T-cell (primary cell): ENCODE measurements at regions of chr9 and their contacts with region 1.

Region 1: GRCh38 chr9:93123561-93124283 is 10.3 kb downstream of the NINJ1 start:
- DNase-seq: no peak
- ATAC-seq: no peak
- H3K4me3 ChIP-seq: no peak overlapping the region
- H3K4me3 Mint-ChIP-seq: peak overlapping the region in 1 of 3 donors; percentile 40
- H3K27ac ChIP-seq: peak overlapping the region; percentile 9
- H3K27ac Mint-ChIP-seq: peak overlapping the region; percentile 46 to 77
- H3K4me1 ChIP-seq: peaks cover 10 to 69% of the 10 kb centered on the region in 2 experiments
- H3K4me1 Mint-ChIP-seq: peaks cover 58 to 70% (median 63%) of the 10 kb centered on the region in 3 donors
- H3K27me3 ChIP-seq: no peaks in the 10 kb centered on the region
- H3K27me3 Mint-ChIP-seq: no peaks in the 10 kb centered on the region

Region 2: DNA sequence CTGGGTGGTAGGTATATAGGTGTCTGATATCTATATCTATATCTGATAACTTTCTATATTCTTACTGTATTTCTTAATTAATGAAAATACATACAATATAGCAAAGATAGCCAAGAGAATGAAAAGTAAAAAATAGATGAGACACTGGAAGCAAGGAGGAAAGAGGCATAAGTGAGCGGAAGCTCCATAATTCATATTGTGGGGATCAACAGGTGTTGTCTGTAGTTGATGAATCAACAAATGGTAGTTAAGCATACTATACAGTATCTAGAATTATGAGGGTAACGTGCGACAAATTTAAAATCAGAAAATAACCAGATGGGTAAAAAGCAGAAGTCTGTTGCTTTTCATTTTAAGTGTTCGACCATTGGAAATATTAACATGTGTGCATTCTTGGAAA is 1015.6 kb before region 1 on chr9:
- CTCF ChIA-PET with region 1: no interaction called
- POLR2A ChIA-PET with region 1: no interaction called
- DNase-seq: no peak
- ATAC-seq: no peak
- H3K4me3 ChIP-seq: no peak overlapping the region
- H3K4me3 Mint-ChIP-seq: no peak overlapping the region
- H3K27ac ChIP-seq: no peak overlapping the region
- H3K27ac Mint-ChIP-seq: no peak overlapping the region
- H3K4me1 ChIP-seq: no peaks in the 10 kb centered on the region
- H3K4me1 Mint-ChIP-seq: peaks cover 28 to 34% (median 34%) of the 10 kb centered on the region in 3 donors
- H3K27me3 ChIP-seq: no peaks in the 10 kb centered on the region
- H3K27me3 Mint-ChIP-seq: no peaks in the 10 kb centered on the region

Region 3: GRCh38 chr9:92180669-92181181 is 943.0 kb before region 1 on chr9:
- CTCF ChIA-PET with region 1: no interaction called
- POLR2A ChIA-PET with region 1: no interaction called
- DNase-seq: no peak
- ATAC-seq: no peak
- H3K4me3 ChIP-seq: no peak overlapping the region
- H3K4me3 Mint-ChIP-seq: no peak overlapping the region
- H3K27ac ChIP-seq: no peak overlapping the region
- H3K27ac Mint-ChIP-seq: no peak overlapping the region
- H3K4me1 ChIP-seq: no peaks in the 10 kb centered on the region
- H3K4me1 Mint-ChIP-seq: no peaks in the 10 kb centered on the region
- H3K27me3 ChIP-seq: peaks cover 0 to 10% of the 10 kb centered on the region in 2 experiments
- H3K27me3 Mint-ChIP-seq: peaks cover 8 to 10% of the 10 kb centered on the region in 2 donors

Region 4: GRCh38 chr9:92820964-92821363 is 302.8 kb before region 1 on chr9:
- CTCF ChIA-PET with region 1: no interaction called
- POLR2A ChIA-PET with region 1: no interaction called
- DNase-seq: no peak
- ATAC-seq: no peak
- H3K4me3 ChIP-seq: no peak overlapping the region
- H3K4me3 Mint-ChIP-seq: no peak overlapping the region
- H3K27ac ChIP-seq: no peak overlapping the region
- H3K27ac Mint-ChIP-seq: no peak overlapping the region
- H3K4me1 ChIP-seq: no peaks in the 10 kb centered on the region
- H3K4me1 Mint-ChIP-seq: no peaks in the 10 kb centered on the region
- H3K27me3 ChIP-seq: peaks cover 0 to 9% of the 10 kb centered on the region in 2 experiments
- H3K27me3 Mint-ChIP-seq: peaks cover 17 to 29% of the 10 kb centered on the region in 2 donors

Region 5: DNA sequence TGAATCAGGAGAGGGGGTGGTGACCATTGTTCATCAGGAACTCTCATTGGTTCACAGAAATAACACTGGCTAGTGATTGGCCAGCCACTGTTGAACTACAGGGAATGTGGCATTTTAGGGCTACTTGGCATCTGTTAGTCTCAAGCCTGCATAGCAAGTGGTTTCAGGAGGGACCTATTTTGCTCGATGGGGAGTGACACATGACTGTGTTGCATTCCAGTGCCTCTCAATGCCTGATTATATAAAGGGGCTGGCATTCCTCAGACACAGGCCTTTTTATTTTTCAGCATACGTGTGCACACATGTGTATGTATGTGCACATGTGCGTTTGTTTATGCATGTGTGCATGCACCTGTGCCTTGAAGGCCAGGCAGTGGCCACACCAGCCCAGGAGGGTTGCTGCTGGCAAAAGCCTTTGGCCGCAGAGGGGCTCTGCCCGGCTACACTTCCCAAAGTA is 153.2 kb before region 1 on chr9:
- CTCF ChIA-PET with region 1: no interaction called
- POLR2A ChIA-PET with region 1: interaction called in 1 of 2 experiments, 12 read pairs
- DNase-seq: peak in 2 of 35 experiments; percentile 7 to 10
- ATAC-seq: no peak
- H3K4me3 ChIP-seq: peak overlapping the region; percentile 13 to 25
- H3K4me3 Mint-ChIP-seq: peak overlapping the region; percentile 84 to 94 (median 91)
- H3K27ac ChIP-seq: peak overlapping the region; percentile 73
- H3K27ac Mint-ChIP-seq: peak overlapping the region; percentile 99 to 100
- H3K4me1 ChIP-seq: peaks cover 46 to 89% of the 10 kb centered on the region in 2 experiments
- H3K4me1 Mint-ChIP-seq: peaks cover 81 to 91% (median 90%) of the 10 kb centered on the region in 3 donors
- H3K27me3 ChIP-seq: no peaks in the 10 kb centered on the region
- H3K27me3 Mint-ChIP-seq: no peaks in the 10 kb centered on the region

Region 6: DNA sequence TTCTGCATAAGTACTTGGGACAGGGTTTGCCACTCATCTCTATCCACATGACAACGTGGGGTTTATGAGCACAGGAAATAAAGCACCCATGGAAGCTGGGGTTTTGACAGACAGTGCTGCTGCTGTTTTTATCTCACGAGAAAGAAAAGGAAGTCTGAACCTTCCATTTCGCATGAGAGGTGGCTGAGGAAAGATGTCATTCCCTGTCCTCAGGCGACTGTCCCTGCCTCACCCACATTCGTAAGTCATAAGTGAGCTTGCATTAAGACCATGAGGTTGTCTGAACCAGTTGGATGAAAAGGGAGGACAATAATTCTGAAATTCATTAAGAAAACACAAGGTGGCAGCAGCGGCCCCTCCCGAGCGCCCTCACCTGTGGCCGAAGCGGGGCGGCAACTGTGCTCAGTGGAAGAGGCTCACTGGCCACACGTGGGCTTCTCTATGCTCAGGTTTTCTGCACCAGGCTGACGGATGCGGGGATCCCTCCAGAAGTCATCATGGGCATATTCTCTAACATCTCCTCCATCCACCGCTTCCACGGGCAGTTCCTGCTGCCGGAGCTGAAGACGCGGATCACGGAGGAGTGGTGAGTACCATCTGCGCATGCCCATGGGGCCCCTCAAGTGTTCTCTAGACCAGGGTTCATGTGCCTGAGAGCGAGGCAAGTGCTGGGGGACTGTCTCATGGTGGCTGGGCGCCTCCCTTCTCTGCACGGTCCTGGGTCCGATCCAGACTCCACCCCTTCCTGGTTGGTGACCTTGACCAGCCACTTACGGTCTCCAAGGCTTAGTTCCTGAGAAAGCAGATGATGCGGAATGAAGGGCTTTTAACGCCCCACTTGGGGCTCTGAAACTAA is 119.9 kb before region 1 on chr9:
- CTCF ChIA-PET with region 1: no interaction called
- POLR2A ChIA-PET with region 1: no interaction called
- DNase-seq: peak in 33 of 35 experiments; percentile 35 to 83 (median 57)
- ATAC-seq: peak; percentile 76
- H3K4me3 ChIP-seq: no peak overlapping the region
- H3K4me3 Mint-ChIP-seq: peak overlapping the region; percentile 31 to 50 (median 49)
- H3K27ac ChIP-seq: peak overlapping the region; percentile 46
- H3K27ac Mint-ChIP-seq: peak overlapping the region; percentile 86 to 96
- H3K4me1 ChIP-seq: peaks cover 34 to 44% of the 10 kb centered on the region in 2 experiments
- H3K4me1 Mint-ChIP-seq: peaks cover 57 to 72% (median 67%) of the 10 kb centered on the region in 3 donors
- H3K27me3 ChIP-seq: no peaks in the 10 kb centered on the region
- H3K27me3 Mint-ChIP-seq: no peaks in the 10 kb centered on the region